GM12878 (cell line): ENCODE measurements at regions of chr6 and their contacts with region 1.

Region 1: GRCh38 chr6:35240840-35241801 is 18.4 kb upstream of the ZNF76 start:
- DNase-seq: no peak
- ATAC-seq: peak; percentile 99
- H3K4me3 ChIP-seq: no peak overlapping the region
- H3K27ac ChIP-seq: no peak overlapping the region
- H3K4me1 ChIP-seq: no peaks in the 10 kb centered on the region
- H3K27me3 ChIP-seq: no peaks in the 10 kb centered on the region
- CTCF ChIP-seq: peak; percentile 94 to 99 (median 95)
- EP300 ChIP-seq: no peak
- POLR2A ChIP-seq: no peak
- RAD21 ChIP-seq: peak; percentile 84

Region 2: GRCh38 chr6:34986845-34987246 is 254.3 kb before region 1 on chr6:
- CTCF ChIA-PET with region 1: interaction called, 18 read pairs
- POLR2A ChIA-PET with region 1: no interaction called
- RAD21 ChIA-PET with region 1: interaction called, 7 read pairs
- SMC1A ChIA-PET with region 1: interaction called, 16 read pairs
- in situ Hi-C with region 1: no loop called
- intact Hi-C with region 1: loop called (anchors 1 kb)
- DNase-seq: no peak
- ATAC-seq: peak; percentile 79
- H3K4me3 ChIP-seq: no peak overlapping the region
- H3K27ac ChIP-seq: no peak overlapping the region
- H3K4me1 ChIP-seq: peaks cover 3% of the 10 kb centered on the region
- H3K27me3 ChIP-seq: no peaks in the 10 kb centered on the region
- CTCF ChIP-seq: peak; percentile 70 to 83 (median 79)
- EP300 ChIP-seq: no peak
- POLR2A ChIP-seq: no peak
- RAD21 ChIP-seq: peak; percentile 94

Region 3: GRCh38 chr6:35146453-35146852 is 94.7 kb before region 1 on chr6:
- CTCF ChIA-PET with region 1: interaction called, 38 read pairs
- POLR2A ChIA-PET with region 1: no interaction called
- RAD21 ChIA-PET with region 1: interaction called, 5 read pairs
- SMC1A ChIA-PET with region 1: interaction called, 6 read pairs
- in situ Hi-C with region 1: no loop called
- intact Hi-C with region 1: loop called (anchors 1 kb)
- DNase-seq: no peak
- ATAC-seq: peak; percentile 86
- H3K4me3 ChIP-seq: no peak overlapping the region
- H3K27ac ChIP-seq: no peak overlapping the region
- H3K4me1 ChIP-seq: peaks cover 6% of the 10 kb centered on the region
- H3K27me3 ChIP-seq: no peaks in the 10 kb centered on the region
- CTCF ChIP-seq: peak; percentile 43 to 73 (median 62); a peak in 5 of 6 replicates
- EP300 ChIP-seq: no peak
- POLR2A ChIP-seq: no peak
- RAD21 ChIP-seq: peak; percentile 71

Region 4: DNA sequence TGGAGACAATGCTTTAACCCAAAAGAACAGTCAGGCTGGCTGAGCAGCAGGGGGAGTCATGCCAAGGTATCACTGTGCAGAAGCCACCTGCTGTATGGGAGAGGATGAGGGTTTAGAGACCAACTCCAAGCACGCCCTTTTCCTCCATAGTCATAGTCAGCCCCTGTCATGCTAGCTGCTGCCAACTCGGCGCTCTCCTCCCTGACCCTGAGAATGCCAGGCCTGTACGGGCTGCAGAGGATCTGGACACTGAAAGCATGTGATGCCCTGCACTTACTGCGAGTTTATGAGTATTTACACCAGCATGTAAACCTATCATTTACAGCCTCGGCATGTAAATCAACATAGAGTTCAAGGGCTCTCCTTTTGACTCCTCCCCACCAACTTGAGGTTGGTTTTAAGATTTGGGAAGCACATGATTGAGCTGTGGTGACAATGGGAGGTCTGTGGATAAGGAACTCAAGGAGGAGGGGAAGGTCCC is 39.0 kb before region 1 on chr6:
- CTCF ChIA-PET with region 1: interaction called, 33 read pairs
- POLR2A ChIA-PET with region 1: no interaction called
- RAD21 ChIA-PET with region 1: interaction called, 13 read pairs
- SMC1A ChIA-PET with region 1: interaction called, 10 read pairs
- in situ Hi-C with region 1: no loop called
- intact Hi-C with region 1: loop called (anchors 5 kb)
- DNase-seq: no peak
- ATAC-seq: 0 out of 3 replicates have a peak, but pooled peaks have one; percentile 17
- H3K4me3 ChIP-seq: no peak overlapping the region
- H3K27ac ChIP-seq: no peak overlapping the region
- H3K4me1 ChIP-seq: no peaks in the 10 kb centered on the region
- H3K27me3 ChIP-seq: no peaks in the 10 kb centered on the region; a peak in 4 of 4 replicates
- CTCF ChIP-seq: no peak
- EP300 ChIP-seq: no peak
- POLR2A ChIP-seq: no peak
- RAD21 ChIP-seq: no peak

Region 5: DNA sequence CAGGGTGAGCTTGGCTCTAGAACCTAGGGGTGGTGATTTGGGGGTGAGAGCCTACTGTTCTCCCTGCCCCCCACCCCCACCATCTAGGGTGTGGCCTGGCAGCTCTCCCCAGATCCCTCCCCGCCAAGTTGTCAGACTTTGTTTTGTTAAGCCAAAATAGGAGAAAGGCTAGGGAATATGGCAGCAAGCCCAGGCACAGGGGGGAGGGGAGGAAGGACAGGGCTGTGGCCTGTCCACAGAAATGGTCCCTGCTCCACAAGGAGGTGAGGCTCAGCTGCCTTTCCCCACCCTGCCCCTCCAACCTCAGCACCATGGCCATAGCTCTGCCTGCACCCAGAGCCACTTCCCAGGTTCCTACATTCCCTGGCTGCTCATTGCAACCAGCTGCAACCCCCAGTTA is 10.2 kb before region 1 on chr6:
- CTCF ChIA-PET with region 1: interaction called, 22 read pairs
- POLR2A ChIA-PET with region 1: no interaction called
- RAD21 ChIA-PET with region 1: no interaction called
- SMC1A ChIA-PET with region 1: interaction called, 10 read pairs
- in situ Hi-C with region 1: no loop called
- intact Hi-C with region 1: no loop called
- DNase-seq: no peak
- ATAC-seq: no peak
- H3K4me3 ChIP-seq: no peak overlapping the region
- H3K27ac ChIP-seq: no peak overlapping the region
- H3K4me1 ChIP-seq: no peaks in the 10 kb centered on the region
- H3K27me3 ChIP-seq: no peaks in the 10 kb centered on the region
- CTCF ChIP-seq: no peak
- EP300 ChIP-seq: no peak
- POLR2A ChIP-seq: no peak
- RAD21 ChIP-seq: no peak

Region 6: DNA sequence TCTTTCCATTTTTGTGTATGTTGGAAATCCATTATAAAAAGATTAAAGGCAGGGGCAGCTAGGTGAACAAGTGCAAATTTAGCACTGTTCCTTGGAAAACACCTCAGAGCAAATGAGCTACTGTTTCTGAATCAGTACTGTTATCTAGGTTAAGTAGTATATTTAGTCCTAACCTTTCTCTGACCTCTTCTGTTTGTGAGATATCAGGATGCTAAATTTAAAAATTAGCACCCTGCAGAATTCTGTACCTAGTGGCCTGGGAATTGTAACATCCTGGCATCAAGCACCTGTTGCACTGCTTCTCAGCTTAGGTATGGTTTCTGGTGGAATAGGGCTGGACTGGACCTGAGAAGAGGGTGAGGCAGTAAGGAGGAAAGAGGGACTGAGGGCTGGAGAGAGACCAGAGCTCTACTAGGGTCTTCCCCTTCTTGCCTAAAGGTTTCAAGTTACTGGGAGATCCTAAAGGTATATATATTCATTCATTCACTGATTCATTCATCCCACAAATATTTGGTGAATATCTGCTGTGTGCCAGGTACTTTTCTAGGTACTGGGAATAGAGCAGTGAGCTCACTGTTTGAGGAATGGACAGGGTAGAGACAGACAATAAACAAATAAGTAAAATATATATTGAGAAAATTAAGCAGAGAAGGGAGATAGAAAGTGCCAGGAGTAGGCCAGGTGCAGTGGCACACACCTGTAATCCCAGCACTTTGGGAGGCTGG is 23.6 kb after region 1 on chr6:
- CTCF ChIA-PET with region 1: interaction called, 19 read pairs
- POLR2A ChIA-PET with region 1: interaction called, 9 read pairs
- RAD21 ChIA-PET with region 1: no interaction called
- SMC1A ChIA-PET with region 1: no interaction called
- in situ Hi-C with region 1: no loop called
- intact Hi-C with region 1: no loop called
- DNase-seq: no peak
- ATAC-seq: no peak
- H3K4me3 ChIP-seq: peak overlapping the region; percentile 48
- H3K27ac ChIP-seq: peak overlapping the region; percentile 40
- H3K4me1 ChIP-seq: peaks cover 9% of the 10 kb centered on the region
- H3K27me3 ChIP-seq: no peaks in the 10 kb centered on the region
- CTCF ChIP-seq: no peak
- EP300 ChIP-seq: no peak
- POLR2A ChIP-seq: no peak
- RAD21 ChIP-seq: no peak

Region 7: DNA sequence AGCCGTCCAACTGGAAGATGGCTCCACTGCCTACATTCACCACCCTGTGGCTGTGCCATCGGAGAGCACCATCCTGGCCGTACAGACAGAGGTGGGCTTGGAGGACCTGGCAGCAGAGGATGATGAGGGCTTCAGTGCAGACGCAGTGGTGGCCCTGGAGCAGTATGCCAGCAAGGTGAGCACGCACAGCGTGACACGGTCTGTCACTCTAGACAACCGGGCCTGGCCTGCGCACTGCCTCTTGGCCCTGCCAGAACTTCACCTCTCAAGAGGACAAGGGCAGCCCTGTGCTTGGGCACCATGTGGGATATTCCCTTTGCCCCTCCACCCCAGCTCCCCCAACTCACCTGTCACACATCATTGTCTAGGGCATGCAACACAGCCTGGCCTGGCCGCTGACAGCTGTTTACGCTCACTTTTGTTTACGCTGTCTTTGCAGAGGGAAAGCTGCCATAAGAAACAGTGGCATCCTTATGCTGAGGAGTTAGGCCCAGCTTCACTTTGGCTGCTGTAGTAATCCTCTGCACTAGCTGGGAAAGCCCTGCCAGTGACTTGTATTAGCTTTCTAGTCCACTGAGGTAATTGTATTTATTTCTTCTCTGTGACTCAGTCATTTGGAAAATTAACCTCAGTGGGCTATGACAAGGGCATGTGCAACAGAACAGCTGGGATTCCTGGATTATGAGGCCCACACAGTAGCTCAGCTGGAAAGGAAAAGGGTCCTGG is 46.7 kb after region 1 on chr6:
- CTCF ChIA-PET with region 1: no interaction called
- POLR2A ChIA-PET with region 1: no interaction called
- RAD21 ChIA-PET with region 1: no interaction called
- SMC1A ChIA-PET with region 1: no interaction called
- in situ Hi-C with region 1: no loop called
- intact Hi-C with region 1: no loop called
- DNase-seq: no peak
- ATAC-seq: no peak
- H3K4me3 ChIP-seq: no peak overlapping the region
- H3K27ac ChIP-seq: no peak overlapping the region
- H3K4me1 ChIP-seq: no peaks in the 10 kb centered on the region
- H3K27me3 ChIP-seq: no peaks in the 10 kb centered on the region
- CTCF ChIP-seq: no peak
- EP300 ChIP-seq: no peak
- POLR2A ChIP-seq: no peak
- RAD21 ChIP-seq: no peak

Region 8: DNA sequence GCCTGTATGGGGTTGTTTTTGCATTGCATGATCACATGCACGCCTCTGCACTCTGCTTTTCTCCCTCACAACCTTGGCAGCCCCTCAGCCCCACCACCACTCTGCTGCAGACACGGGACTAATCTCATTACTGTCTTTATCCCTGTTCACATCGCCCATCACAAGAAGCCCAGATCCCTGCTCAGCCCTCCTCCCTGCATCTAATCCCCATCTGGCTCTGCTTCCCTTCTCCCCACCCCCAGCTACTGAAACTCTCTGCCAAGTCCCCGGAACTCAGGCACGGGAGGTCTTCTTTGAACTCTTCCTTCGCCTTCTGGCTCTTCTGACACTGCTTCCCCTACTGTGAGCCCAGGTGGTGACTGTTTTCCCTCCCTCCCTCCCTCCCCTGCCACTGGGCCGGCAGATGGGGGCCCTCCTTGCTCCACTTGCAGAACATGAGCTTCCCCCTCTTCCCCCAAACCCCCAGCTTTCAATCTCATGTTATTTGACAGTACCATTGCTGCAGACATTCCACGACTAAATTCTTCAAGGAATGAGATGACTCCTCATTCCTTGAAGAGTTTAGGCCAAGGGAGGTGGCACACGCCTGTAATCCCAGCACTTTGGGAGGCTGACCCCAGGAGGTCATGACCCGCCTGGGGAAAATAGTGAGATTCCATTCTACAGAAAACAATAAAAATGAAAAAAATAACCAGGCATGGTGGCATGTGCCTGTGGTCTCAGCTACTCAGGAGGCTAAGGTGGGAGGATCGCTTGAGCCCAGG is 293.5 kb after region 1 on chr6:
- CTCF ChIA-PET with region 1: no interaction called
- POLR2A ChIA-PET with region 1: no interaction called
- RAD21 ChIA-PET with region 1: no interaction called
- SMC1A ChIA-PET with region 1: no interaction called
- in situ Hi-C with region 1: no loop called
- intact Hi-C with region 1: no loop called
- DNase-seq: no peak
- ATAC-seq: no peak
- H3K4me3 ChIP-seq: no peak overlapping the region
- H3K27ac ChIP-seq: no peak overlapping the region
- H3K4me1 ChIP-seq: no peaks in the 10 kb centered on the region
- H3K27me3 ChIP-seq: no peaks in the 10 kb centered on the region
- CTCF ChIP-seq: no peak
- EP300 ChIP-seq: no peak
- POLR2A ChIP-seq: no peak
- RAD21 ChIP-seq: no peak